Ascending aorta (tissue), 2 donors: ENCODE measurements at regions of chr19 and their contacts with region 1.

Region 1: GRCh38 chr19:7145494-7146485 is 76.3 kb downstream of the ZNF557 start:
- DNase-seq: no peak
- H3K4me3 ChIP-seq: no peak overlapping the region
- H3K27ac ChIP-seq: no peak overlapping the region
- H3K4me1 ChIP-seq: no peaks in the 10 kb centered on the region
- H3K27me3 ChIP-seq: no peaks in the 10 kb centered on the region
- CTCF ChIP-seq: no peak

Region 2: GRCh38 chr19:7104747-7105447 is 40.9 kb before region 1 on chr19:
- intact Hi-C with region 1: loop called (anchors 5 kb)
- DNase-seq: no peak
- H3K4me3 ChIP-seq: no peak overlapping the region
- H3K27ac ChIP-seq: no peak overlapping the region
- H3K4me1 ChIP-seq: no peaks in the 10 kb centered on the region
- H3K27me3 ChIP-seq: no peaks in the 10 kb centered on the region
- CTCF ChIP-seq: no peak

Region 3: GRCh38 chr19:7340959-7341837 is 195.4 kb after region 1 on chr19:
- intact Hi-C with region 1: loop called (anchors 1 kb)
- DNase-seq: peak in 1 of 2 donors; percentile 86
- H3K4me3 ChIP-seq: no peak overlapping the region
- H3K27ac ChIP-seq: no peak overlapping the region
- H3K4me1 ChIP-seq: peaks cover 0 to 5% of the 10 kb centered on the region in 2 donors
- H3K27me3 ChIP-seq: no peaks in the 10 kb centered on the region
- CTCF ChIP-seq: peak; percentile 87 to 96 (median 91)